Psoas muscle (tissue), 8 donors: ENCODE measurements at regions of chr7 and their contacts with region 1.

Region 1: DNA sequence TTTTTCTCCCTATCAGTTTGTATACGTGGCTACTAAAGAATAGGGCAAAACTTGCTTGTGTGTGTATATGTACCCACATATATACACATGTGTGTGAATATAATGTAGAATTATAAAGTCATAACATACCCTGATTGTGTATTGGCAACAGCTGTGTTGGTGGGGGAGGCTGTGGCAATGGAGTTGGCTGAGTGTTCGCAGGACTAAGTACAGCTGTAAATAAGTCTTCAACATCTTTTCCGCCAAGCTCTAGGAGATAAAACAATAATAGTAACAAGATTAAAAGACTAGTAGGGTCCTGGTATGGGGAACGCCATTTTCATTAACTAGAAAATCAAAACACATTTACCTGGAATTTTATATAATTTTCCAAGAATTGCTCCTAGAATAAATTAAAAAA is 168.4 kb downstream of the GALNT11 start:
- DNase-seq: no peak
- ATAC-seq: no peak
- H3K4me3 ChIP-seq: no peak overlapping the region
- H3K27ac ChIP-seq: no peak overlapping the region
- H3K4me1 ChIP-seq: no peaks in the 10 kb centered on the region
- H3K27me3 ChIP-seq: no peaks in the 10 kb centered on the region
- CTCF ChIP-seq: no peak

Region 2: GRCh38 chr7:152152267-152152666 is 41.6 kb before region 1 on chr7:
- intact Hi-C with region 1: loop called in 1 of 2 experiments (anchors 5 kb)
- DNase-seq: no peak
- ATAC-seq: peak in 1 of 4 donors; percentile 21
- H3K4me3 ChIP-seq: no peak overlapping the region
- H3K27ac ChIP-seq: no peak overlapping the region
- H3K4me1 ChIP-seq: no peaks in the 10 kb centered on the region
- H3K27me3 ChIP-seq: no peaks in the 10 kb centered on the region
- CTCF ChIP-seq: no peak